Vagina (tissue), 2 donors: ENCODE measurements at regions of chr7 and their contacts with region 1.

Region 1: GRCh38 chr7:27196287-27196767 is 3.6 kb downstream of the HOXA13 start:
- DNase-seq: no peak
- H3K4me3 ChIP-seq: peak overlapping the region; percentile 88 to 91
- H3K27ac ChIP-seq: peak overlapping the region; percentile 99
- H3K4me1 ChIP-seq: peaks cover 20% of the 10 kb centered on the region
- H3K27me3 ChIP-seq: peaks cover 11% of the 10 kb centered on the region
- CTCF ChIP-seq: peak; percentile 48 to 82 (median 74)
- POLR2A ChIP-seq: no peak

Region 2: DNA sequence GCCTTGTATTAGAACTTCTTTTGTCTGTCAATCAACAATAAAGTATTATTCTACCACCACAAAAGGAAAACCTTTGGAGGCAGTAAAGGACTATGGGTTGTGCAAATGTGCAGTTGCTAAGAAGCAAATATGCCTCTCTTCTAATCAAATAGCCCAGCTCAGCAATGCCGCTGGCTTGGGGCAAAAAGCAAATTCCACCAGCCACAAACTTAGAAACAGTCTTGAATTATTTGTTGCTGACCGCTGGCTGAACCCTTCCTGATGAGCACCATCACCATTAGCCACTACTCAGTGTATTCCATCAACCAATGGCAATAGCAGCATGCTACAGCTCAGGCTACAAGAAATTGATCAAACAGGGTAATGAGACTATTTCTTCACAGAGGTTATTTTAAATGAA is 382.9 kb before region 1 on chr7:
- intact Hi-C with region 1: no loop called
- DNase-seq: no peak
- H3K4me3 ChIP-seq: no peak overlapping the region
- H3K27ac ChIP-seq: no peak overlapping the region
- H3K4me1 ChIP-seq: peaks cover 3% of the 10 kb centered on the region
- H3K27me3 ChIP-seq: no peaks in the 10 kb centered on the region
- CTCF ChIP-seq: no peak
- POLR2A ChIP-seq: no peak

Region 3: DNA sequence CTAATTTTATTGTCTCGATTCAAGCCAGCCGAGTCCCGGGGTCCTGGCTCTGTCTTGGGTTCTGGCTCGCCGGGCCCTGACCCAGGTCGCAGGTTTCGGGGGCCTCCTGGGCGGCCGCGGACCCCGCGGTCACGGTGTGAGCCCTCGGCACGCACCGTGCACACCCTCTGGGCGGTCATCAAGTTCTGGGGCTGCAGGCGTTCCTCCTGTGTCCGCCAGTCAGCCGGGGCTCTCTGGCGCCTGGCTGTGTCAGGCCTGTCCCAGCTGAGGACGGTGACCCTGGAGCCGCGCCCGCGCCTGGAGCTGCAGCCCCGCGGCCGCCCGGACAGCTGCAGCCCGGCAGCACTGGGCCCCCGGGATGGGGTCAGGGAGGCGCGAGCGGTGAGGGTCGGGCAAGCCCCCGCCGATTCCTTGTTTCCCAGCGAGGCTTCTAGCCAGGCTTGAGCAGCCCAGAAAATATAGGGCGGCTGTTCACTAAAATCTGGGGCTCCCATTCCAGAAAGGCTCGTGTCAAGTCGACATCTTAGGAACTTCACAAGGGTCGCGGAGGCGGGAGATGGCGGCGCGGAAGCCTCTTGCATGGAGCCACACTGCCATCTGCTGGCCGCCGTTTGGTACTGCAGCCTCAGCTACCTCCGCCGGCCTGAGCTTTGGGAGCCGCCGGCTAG is 35.6 kb before region 1 on chr7:
- intact Hi-C with region 1: no loop called
- DNase-seq: no peak
- H3K4me3 ChIP-seq: peak overlapping the region; percentile 55 to 64
- H3K27ac ChIP-seq: peak overlapping the region; percentile 75
- H3K4me1 ChIP-seq: peaks cover 42% of the 10 kb centered on the region
- H3K27me3 ChIP-seq: no peaks in the 10 kb centered on the region
- CTCF ChIP-seq: peak; percentile 98 to 100 (median 99)
- POLR2A ChIP-seq: no peak

Region 4: GRCh38 chr7:27576360-27576944 is 380.1 kb after region 1 on chr7:
- intact Hi-C with region 1: loop called (anchors 5 kb)
- DNase-seq: no peak
- H3K4me3 ChIP-seq: no peak overlapping the region
- H3K27ac ChIP-seq: peak overlapping the region; percentile 55
- H3K4me1 ChIP-seq: peaks cover 5% of the 10 kb centered on the region
- H3K27me3 ChIP-seq: no peaks in the 10 kb centered on the region
- CTCF ChIP-seq: peak; percentile 26 to 63 (median 44)
- POLR2A ChIP-seq: no peak

Region 5: GRCh38 chr7:27774717-27775328 is 578.5 kb after region 1 on chr7:
- intact Hi-C with region 1: loop called (anchors 10 kb)
- DNase-seq: no peak
- H3K4me3 ChIP-seq: no peak overlapping the region
- H3K27ac ChIP-seq: no peak overlapping the region
- H3K4me1 ChIP-seq: peaks cover 18% of the 10 kb centered on the region
- H3K27me3 ChIP-seq: no peaks in the 10 kb centered on the region
- CTCF ChIP-seq: peak in 1 of 3 experiments; percentile 48
- POLR2A ChIP-seq: no peak

Region 6: DNA sequence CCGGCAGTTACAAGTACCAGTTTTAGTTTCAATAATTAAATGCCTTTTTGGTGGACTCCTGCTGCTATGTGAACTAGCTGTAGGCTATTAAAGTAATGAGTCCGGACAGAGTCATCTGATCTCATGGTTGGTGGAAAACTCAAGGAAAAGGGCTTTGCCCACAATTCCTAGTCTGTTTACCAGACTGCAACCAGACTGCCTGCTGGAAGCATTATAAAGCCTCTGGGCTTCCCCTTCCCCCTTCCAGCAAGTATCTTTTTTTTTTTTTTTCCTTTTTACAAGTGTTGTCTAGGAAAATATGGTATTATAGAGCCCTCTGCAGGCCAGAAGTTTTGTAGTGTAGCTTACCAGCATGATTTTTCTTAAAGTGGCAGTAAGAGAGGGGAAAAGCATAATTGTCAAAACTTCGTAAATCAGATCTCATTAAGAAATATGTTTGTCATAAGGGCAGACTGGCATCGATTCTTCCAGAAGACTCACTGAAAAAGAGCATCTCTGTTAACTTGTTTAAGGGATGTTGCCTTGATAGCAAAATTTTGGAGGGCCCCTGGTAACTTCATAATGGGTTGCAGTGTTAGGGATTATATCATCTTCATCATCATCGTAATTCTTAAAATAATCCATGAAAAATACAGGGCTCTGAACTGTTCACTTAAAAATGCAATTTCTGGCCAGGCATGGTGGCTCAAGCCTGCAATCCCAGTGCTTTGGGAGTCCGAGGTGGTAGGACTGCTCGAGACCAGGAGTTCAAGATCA is 724.9 kb after region 1 on chr7:
- intact Hi-C with region 1: loop called (anchors 10 kb)
- DNase-seq: no peak
- H3K4me3 ChIP-seq: no peak overlapping the region
- H3K27ac ChIP-seq: peak overlapping the region; percentile 12
- H3K4me1 ChIP-seq: peaks cover 21% of the 10 kb centered on the region
- H3K27me3 ChIP-seq: no peaks in the 10 kb centered on the region
- CTCF ChIP-seq: peak in 2 of 3 experiments; percentile 37 to 44
- POLR2A ChIP-seq: no peak